Ascending aorta (tissue), 2 donors: ENCODE measurements at regions of chr2 and their contacts with region 1.

Region 1: GRCh38 chr2:170928824-170929685 is at the start of gene GORASP2:
- DNase-seq: peak; percentile 96 to 100
- H3K4me3 ChIP-seq: peak within 1 kb of the TSS; percentile 91 to 100
- H3K27ac ChIP-seq: peak within 1 kb of the TSS; percentile 96 to 100
- H3K4me1 ChIP-seq: peaks cover 3 to 21% of the 10 kb centered on the region in 2 donors
- H3K27me3 ChIP-seq: no peaks in the 10 kb centered on the region
- CTCF ChIP-seq: peak; percentile 90 to 96 (median 95)
- total RNA-seq, gene GORASP2: 21.5 TPM

Region 2: GRCh38 chr2:170770606-170771420 is 158.2 kb before region 1 on chr2:
- intact Hi-C with region 1: loop called (anchors 2 kb)
- DNase-seq: peak in 1 of 2 donors; percentile 83
- H3K4me3 ChIP-seq: peak overlapping the region; percentile 71 to 75
- H3K27ac ChIP-seq: peak overlapping the region; percentile 68 to 80
- H3K4me1 ChIP-seq: no peaks in the 10 kb centered on the region
- H3K27me3 ChIP-seq: no peaks in the 10 kb centered on the region
- CTCF ChIP-seq: no peak

Region 3: DNA sequence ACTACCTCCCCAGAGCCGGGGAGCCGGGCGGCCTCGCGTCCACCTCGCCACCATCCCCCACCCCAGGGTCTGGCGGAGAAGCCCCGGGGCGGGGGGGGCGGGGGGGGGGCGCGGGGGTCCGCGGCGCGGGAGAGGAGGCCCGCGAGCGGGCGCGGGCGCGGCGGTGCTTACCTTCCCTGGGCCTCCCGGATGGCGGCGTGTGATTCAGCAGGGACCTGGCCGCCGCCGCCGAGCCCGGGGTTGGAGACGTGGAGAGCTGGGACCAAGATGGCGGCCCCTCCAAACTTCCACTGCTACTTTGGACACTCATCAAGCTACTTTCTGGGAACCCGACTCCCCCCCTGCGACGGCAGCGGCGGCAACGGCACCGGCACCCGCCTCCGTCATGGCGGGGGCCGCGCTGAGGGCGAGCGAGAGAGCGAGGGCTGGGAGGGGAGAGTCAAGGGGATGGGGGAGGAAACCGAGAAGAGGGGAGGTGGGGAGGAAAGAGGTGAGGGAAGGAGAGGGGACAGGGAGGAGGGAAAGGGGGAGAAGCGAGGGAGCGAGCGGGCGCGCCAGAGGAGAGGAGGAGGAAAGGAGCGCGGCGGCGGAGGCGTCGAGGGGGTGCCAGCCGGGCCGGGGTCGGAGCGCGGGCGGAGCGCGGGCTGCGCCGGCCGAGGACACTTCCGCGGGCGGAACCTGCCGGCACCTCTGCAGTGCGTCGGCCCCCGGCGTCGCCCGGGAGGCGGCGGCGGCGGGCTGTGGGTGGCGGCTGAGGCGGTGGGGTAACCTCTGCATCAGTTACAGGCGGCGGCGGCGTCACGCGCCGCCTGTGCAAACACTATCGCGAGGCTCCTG is 231.3 kb after region 1 on chr2 and contains the start of gene TLK1:
- intact Hi-C with region 1: loop called (anchors 1 kb)
- DNase-seq: peak; percentile 17 to 85
- H3K4me3 ChIP-seq: peak within 1 kb of the TSS; percentile 96 to 97
- H3K27ac ChIP-seq: peak within 1 kb of the TSS; percentile 98 to 99
- H3K4me1 ChIP-seq: peaks cover 0 to 7% of the 10 kb centered on the region in 2 donors
- H3K27me3 ChIP-seq: no peaks in the 10 kb centered on the region
- CTCF ChIP-seq: no peak
- total RNA-seq, gene TLK1: 32.2 TPM

Region 4: DNA sequence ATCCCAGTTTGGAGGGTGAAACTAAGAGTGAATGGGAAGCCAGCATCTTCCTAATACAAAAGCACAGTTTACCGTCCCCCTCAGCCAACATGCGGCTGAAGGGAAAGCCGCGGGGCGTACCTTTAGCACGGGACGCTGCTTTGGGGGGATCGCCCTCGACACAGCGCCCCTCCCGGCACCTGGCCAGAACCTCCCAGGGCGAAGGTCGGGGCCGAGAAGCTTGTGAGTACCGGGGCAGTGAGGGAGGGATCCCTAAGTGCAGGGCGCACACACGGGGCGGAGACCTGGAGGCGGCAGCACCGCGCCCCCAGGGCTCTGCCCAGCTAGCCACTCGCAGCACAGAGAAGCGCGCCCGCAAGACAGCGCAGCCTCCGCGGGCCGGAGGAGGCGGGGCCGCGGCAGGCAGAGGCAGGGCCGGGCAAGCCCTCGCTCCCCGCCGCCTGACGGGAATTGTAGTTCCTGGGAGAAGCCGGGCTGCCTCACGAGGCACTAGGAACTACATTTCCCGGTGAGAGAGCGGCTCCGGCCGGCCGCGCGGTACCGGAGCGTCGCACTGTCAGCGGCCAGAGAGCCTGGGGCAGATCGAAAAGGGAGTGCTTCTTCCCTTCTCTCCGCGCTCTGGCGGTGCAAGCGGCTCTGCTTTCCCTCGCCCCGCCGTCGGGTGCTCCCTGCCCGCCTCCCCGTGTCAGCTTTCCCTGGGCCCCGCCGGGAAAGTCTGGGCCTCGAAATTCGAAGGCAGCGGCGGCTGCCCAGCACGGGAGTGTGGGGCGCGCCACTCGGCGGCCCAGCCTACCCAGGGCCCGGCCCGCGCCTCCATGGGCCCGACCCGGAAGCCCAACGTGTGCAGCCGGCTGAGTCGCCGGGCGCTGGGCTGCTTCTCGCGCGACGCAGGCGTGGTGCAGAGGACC is 505.0 kb after region 1 on chr2 and contains the starts of genes DCAF17 and METTL8:
- intact Hi-C with region 1: loop called (anchors 1 kb)
- DNase-seq: peak; percentile 85 to 97
- H3K4me3 ChIP-seq: peak within 1 kb of the TSS; percentile 82 to 97
- H3K27ac ChIP-seq: peak within 1 kb of the TSS; percentile 96 to 99
- H3K4me1 ChIP-seq: peaks cover 0 to 14% of the 10 kb centered on the region in 2 donors
- H3K27me3 ChIP-seq: no peaks in the 10 kb centered on the region
- CTCF ChIP-seq: peak; percentile 16 to 42 (median 26)
- total RNA-seq, gene DCAF17: 22.6 TPM
- total RNA-seq, gene METTL8: 6.7 TPM

Region 5: DNA sequence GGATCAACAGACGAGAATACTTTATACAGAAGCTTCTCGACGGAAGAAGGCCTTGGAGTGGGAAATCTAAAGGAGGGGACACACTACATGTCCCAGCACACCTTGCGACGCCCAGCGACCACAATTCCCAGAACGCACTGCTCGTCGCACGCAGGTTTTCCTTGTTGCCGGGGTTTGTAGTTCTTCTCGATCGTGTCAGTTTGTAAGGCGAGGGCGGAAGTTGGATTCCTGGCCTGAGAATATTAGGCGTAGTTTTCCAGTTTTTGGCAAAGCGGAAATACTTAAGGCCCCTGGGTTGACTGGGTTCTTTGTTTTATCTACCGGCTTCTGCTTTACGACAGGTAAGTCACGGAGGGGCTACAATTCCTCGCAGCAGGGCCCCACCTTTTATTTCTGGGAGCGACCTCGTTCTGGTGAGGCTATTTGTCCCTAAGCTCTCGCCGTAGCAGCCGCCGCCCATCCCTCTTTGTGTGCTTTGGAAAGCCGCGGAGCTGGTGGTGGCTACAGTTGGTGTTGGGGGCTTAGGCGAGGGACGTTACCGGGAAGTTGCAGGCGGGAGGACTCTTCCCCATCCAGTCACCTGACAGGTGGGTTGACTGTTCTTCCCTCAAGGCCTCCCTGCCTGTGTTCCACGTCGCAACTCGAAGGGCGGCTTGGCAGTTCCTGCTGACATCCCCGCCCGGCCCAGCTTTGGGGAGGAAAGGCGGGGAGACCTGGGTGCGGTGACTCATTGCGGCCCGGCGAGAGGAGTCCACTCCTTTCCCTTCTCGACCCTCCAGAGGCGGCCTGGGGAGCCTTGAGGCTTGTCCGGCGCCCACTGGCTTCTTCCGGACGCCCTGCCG is 758.5 kb after region 1 on chr2 and contains the start of gene DYNC1I2:
- intact Hi-C with region 1: loop called (anchors 1 kb)
- DNase-seq: peak; percentile 70 to 96
- H3K4me3 ChIP-seq: peak within 1 kb of the TSS; percentile 76 to 85
- H3K27ac ChIP-seq: peak within 1 kb of the TSS; percentile 84 to 92
- H3K4me1 ChIP-seq: peaks cover 0 to 9% of the 10 kb centered on the region in 2 donors
- H3K27me3 ChIP-seq: no peaks in the 10 kb centered on the region
- CTCF ChIP-seq: no peak
- total RNA-seq, gene DYNC1I2: 81.0 TPM

Region 6: GRCh38 chr2:172555522-172556283 is 1626.6 kb after region 1 on chr2 and contains the start of gene PDK1:
- intact Hi-C with region 1: loop called (anchors 2 kb)
- DNase-seq: peak; percentile 52 to 93
- H3K4me3 ChIP-seq: peak within 1 kb of the TSS; percentile 96 to 97
- H3K27ac ChIP-seq: peak within 1 kb of the TSS; percentile 93 to 95
- H3K4me1 ChIP-seq: peaks cover 0 to 10% of the 10 kb centered on the region in 2 donors
- H3K27me3 ChIP-seq: no peaks in the 10 kb centered on the region
- CTCF ChIP-seq: no peak
- total RNA-seq, gene PDK1: 24.2 TPM